Heart left ventricle (tissue), 16 donors: ENCODE measurements at regions of chr12 and their contacts with region 1.

Region 1: GRCh38 chr12:26651566-26652188 is 181.3 kb downstream of the ITPR2 start:
- DNase-seq: peak in 2 of 5 donors; percentile 26 to 39
- ATAC-seq: peak in 3 of 4 donors; percentile 65 to 80 (median 76)
- H3K4me3 ChIP-seq: no peak overlapping the region
- H3K27ac ChIP-seq: no peak overlapping the region
- H3K4me1 ChIP-seq: peaks cover 0 to 8% (median 0%) of the 10 kb centered on the region in 12 donors
- H3K27me3 ChIP-seq: no peaks in the 10 kb centered on the region
- CTCF ChIP-seq: peak; percentile 65 to 83 (median 78)
- POLR2A ChIP-seq: no peak

Region 2: GRCh38 chr12:25436203-25437030 is 1215.3 kb before region 1 on chr12:
- intact Hi-C with region 1: loop called in 1 of 10 experiments (anchors 5 kb)
- DNase-seq: peak in 1 of 5 donors; percentile 29
- ATAC-seq: peak in 3 of 4 donors; percentile 63 to 78 (median 70)
- H3K4me3 ChIP-seq: peak overlapping the region in 9 of 12 donors; percentile 30 to 48 (median 35)
- H3K27ac ChIP-seq: no peak overlapping the region
- H3K4me1 ChIP-seq: peaks cover 0 to 12% (median 0%) of the 10 kb centered on the region in 12 donors
- H3K27me3 ChIP-seq: no peaks in the 10 kb centered on the region
- CTCF ChIP-seq: peak; percentile 74 to 88 (median 79)
- POLR2A ChIP-seq: no peak

Region 3: DNA sequence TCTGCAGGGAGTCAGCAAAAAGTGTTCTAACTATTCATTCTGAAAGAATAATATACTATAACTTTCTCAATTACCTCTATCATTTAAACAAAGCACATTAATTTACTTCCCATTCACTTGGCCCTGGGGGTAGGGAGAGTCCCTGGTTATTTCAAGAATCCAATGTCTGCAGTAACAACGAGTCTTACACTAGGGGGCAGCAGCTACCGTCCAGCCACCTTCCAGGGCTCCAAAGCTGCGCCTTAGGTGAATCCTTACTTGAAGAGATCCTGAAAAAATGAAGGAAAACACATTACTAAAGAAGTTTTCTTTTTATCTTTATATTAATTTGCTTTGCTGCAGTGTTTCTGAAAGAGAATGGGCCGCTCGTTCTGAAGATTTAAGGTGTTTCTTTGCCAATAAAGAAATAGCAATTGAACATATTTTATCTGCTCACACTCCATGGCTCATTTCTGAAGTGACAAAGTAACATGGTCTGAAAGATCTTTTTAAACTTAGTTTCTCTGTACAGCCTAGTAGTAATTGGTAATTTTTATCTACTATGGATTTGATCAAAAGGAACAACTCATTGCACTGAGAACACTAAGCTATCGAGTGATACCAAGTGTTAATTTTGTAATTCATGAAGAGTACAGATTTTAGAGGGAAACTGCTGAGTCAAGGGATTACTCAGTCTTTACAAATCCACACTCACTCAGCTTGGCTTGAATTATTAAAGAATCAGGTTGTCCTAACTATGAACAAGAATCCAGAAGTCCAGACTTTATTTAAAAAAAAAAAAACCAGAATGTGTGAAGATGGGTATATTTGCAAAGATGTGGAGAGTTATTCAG is 554.4 kb before region 1 on chr12:
- intact Hi-C with region 1: loop called (anchors 1 to 10 kb)
- DNase-seq: peak; percentile 64 to 74 (median 73)
- ATAC-seq: peak; percentile 77 to 98 (median 94)
- H3K4me3 ChIP-seq: no peak overlapping the region
- H3K27ac ChIP-seq: no peak overlapping the region
- H3K4me1 ChIP-seq: peaks cover 0 to 5% (median 0%) of the 10 kb centered on the region in 12 donors
- H3K27me3 ChIP-seq: no peaks in the 10 kb centered on the region
- CTCF ChIP-seq: peak; percentile 92 to 98 (median 96)
- POLR2A ChIP-seq: no peak

Region 4: GRCh38 chr12:26119391-26119981 is 532.2 kb before region 1 on chr12:
- intact Hi-C with region 1: loop called in 4 of 10 experiments (anchors 2 to 10 kb)
- DNase-seq: no peak
- ATAC-seq: peak in 2 of 4 donors; percentile 15 to 17
- H3K4me3 ChIP-seq: peak overlapping the region in 1 of 12 donors; percentile 81
- H3K27ac ChIP-seq: peak overlapping the region in 8 of 12 donors; percentile 51 to 98 (median 94)
- H3K4me1 ChIP-seq: peaks cover 0 to 61% (median 34%) of the 10 kb centered on the region in 12 donors
- H3K27me3 ChIP-seq: peaks cover 0 to 10% (median 0%) of the 10 kb centered on the region in 9 donors
- CTCF ChIP-seq: peak; percentile 23 to 73 (median 50)
- POLR2A ChIP-seq: no peak

Region 5: DNA sequence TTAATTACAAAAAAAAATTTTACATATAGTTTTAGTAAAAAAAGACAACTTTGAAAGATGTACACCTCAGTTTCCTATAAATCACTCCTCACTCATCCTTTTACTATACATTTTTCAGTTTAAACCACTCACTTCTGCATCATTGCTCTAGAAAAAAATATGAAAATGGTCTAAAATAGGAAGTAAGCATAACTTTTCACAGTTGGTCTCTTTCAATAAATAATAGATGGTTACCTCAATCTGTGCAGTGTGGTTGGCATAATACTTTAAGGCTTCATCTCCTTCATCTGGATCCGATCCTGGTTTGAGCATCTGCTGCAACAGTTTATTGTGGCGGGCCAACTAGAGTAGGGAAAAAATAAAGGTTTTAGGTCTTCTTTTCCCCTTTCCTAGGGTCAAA is 208.4 kb before region 1 on chr12:
- intact Hi-C with region 1: loop called in 3 of 10 experiments (anchors 10 kb)
- DNase-seq: no peak
- ATAC-seq: no peak
- H3K4me3 ChIP-seq: no peak overlapping the region
- H3K27ac ChIP-seq: no peak overlapping the region
- H3K4me1 ChIP-seq: peaks cover 0 to 6% (median 0%) of the 10 kb centered on the region in 12 donors
- H3K27me3 ChIP-seq: no peaks in the 10 kb centered on the region
- CTCF ChIP-seq: no peak
- POLR2A ChIP-seq: no peak

Region 6: GRCh38 chr12:26628234-26628633 is 23.4 kb before region 1 on chr12:
- intact Hi-C with region 1: no loop called
- DNase-seq: no peak
- ATAC-seq: no peak
- H3K4me3 ChIP-seq: no peak overlapping the region
- H3K27ac ChIP-seq: no peak overlapping the region
- H3K4me1 ChIP-seq: peaks cover 0 to 12% (median 0%) of the 10 kb centered on the region in 12 donors
- H3K27me3 ChIP-seq: no peaks in the 10 kb centered on the region
- CTCF ChIP-seq: no peak
- POLR2A ChIP-seq: no peak